AG04449 (cell line): ENCODE measurements at regions of chr6 and their contacts with region 1.

Region 1: GRCh38 chr6:25223490-25223991 is 55.6 kb upstream of the CARMIL1 start:
- DNase-seq: no peak
- H3K4me3 ChIP-seq: peak overlapping the region; percentile 23
- CTCF ChIP-seq: peak; percentile 72

Region 2: DNA sequence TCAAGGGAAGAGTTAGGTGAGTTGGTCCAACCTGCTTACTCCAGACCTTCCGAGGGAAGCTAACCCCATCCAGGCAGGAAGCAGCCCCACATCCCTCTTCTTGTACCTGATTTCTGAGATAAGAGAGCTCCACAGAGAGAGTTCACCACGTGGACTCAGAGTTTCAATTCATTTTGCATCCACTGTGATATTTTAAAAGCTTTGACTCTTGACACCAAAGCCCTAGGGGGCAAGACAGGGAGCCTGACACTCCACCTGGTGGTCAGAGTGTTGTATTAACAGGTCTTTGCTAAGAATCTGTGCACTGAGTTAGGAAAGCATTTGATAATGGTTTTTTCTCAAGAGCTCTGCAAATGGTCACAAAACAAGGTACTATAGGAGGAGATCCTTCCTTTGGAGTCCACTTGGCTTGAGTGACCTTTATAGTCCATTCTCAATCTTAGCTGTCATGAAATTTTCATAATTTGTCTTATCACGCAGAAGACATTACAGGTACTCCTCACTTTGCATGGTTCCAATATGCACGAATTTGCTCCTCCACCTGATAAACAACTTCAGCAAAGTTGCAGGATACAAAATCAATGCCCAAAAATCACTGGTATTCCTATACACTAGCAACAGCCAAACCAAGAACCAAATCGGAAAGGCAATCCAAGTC is 231.6 kb before region 1 on chr6:
- CTCF ChIA-PET with region 1: no interaction called
- POLR2A ChIA-PET with region 1: no interaction called
- DNase-seq: no peak
- H3K4me3 ChIP-seq: no peak overlapping the region
- CTCF ChIP-seq: peak; percentile 54

Region 3: GRCh38 chr6:25166955-25167748 is 56.4 kb before region 1 on chr6:
- CTCF ChIA-PET with region 1: no interaction called
- POLR2A ChIA-PET with region 1: no interaction called
- DNase-seq: no peak
- H3K4me3 ChIP-seq: no peak overlapping the region
- CTCF ChIP-seq: no peak

Region 4: GRCh38 chr6:25193460-25194171 is 29.9 kb before region 1 on chr6:
- CTCF ChIA-PET with region 1: interaction called, 12 read pairs
- POLR2A ChIA-PET with region 1: no interaction called
- DNase-seq: peak; percentile 83
- H3K4me3 ChIP-seq: no peak overlapping the region
- CTCF ChIP-seq: no peak

Region 5: DNA sequence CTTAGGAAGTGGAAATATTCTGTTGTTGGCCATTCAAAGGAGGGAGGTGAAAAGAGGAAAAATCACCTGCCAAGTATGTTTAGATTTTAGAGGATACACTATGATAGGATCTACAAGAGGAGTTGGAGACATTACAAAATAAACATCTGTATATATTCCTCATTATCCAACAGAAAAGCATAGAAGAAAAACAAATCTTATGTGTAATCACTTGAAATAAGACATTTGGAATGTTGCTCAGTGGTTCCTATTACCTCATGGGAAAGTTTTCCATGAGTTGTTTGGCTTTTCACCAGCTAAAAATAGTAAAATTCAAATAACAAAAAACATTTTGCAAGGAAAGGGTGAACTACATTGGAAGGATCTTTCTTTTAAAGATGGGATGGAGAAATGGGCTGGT is 21.0 kb before region 1 on chr6:
- CTCF ChIA-PET with region 1: interaction called, 10 read pairs
- POLR2A ChIA-PET with region 1: no interaction called
- DNase-seq: peak; percentile 74
- H3K4me3 ChIP-seq: no peak overlapping the region
- CTCF ChIP-seq: no peak

Region 6: GRCh38 chr6:25242567-25242966 is 19.0 kb after region 1 on chr6:
- CTCF ChIA-PET with region 1: interaction called, 13 read pairs
- POLR2A ChIA-PET with region 1: no interaction called
- DNase-seq: no peak
- H3K4me3 ChIP-seq: no peak overlapping the region
- CTCF ChIP-seq: no peak

Region 7: DNA sequence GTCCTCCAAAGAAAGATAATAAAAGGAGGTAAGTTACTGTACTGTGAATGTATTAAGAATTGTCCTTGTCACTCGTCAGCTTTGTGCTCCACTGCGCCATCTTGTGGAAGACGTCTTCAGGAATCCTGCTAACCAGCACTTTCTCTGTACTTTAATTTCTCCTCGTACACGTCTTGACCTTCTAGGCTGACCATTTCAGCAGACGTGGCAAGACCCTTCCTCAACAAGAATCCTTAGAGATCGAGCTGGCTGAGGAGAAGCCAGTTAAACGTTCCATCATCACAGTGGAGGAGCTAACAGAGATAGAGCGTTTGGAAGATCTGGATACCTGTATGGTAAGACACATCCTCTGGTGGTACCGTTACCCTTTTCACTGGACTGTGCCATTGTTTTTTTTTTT is 333.0 kb after region 1 on chr6:
- CTCF ChIA-PET with region 1: interaction called, 124 read pairs
- POLR2A ChIA-PET with region 1: no interaction called
- DNase-seq: peak; percentile 12
- H3K4me3 ChIP-seq: no peak overlapping the region
- CTCF ChIP-seq: peak; percentile 77

Region 8: DNA sequence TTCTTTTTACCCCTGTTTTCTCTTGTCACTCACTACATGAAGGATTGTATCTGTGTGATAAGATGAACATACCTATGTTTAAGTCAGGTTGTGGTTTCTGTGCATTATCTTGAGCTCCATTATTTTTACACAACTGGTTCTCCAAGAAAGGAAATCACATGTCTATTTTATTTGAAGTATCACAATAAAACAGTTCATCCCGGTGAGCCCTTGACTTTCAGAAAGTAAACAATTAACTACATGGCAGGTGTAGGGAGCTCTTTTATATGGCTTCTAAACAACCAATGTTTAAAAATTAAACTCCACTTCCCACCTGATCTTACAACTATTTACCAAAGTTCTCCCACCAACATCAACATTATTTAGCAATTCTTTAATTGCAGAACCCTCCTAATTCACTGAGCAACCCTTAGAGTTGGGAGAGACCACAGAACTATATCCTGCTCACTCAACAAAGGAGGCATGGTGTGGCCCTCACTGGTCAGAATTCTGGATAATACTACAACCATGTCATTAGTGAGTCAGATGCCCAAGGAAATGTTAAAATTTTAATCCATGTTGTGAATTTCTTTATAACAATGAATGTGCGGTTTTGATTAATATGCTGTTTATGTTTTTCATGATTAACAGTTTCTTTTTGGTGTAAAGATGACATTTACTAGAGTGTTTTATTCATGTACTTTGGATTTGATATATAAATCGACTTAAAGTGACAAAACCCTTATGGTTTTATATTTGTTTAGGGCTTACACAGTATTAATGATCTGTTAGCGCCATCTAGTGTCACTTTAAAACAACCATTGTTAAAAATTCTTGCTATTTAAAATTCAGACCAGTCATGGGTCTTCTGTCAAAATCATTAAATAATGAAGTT is 378.5 kb after region 1 on chr6:
- CTCF ChIA-PET with region 1: interaction called, 31 read pairs
- POLR2A ChIA-PET with region 1: no interaction called
- DNase-seq: peak; percentile 7
- H3K4me3 ChIP-seq: no peak overlapping the region
- CTCF ChIP-seq: peak; percentile 15

Region 9: GRCh38 chr6:25717866-25718740 is 494.6 kb after region 1 on chr6:
- CTCF ChIA-PET with region 1: interaction called, 14 read pairs
- POLR2A ChIA-PET with region 1: no interaction called
- DNase-seq: no peak
- H3K4me3 ChIP-seq: no peak overlapping the region
- CTCF ChIP-seq: peak; percentile 35